Psoas muscle (tissue), 8 donors: ENCODE measurements at regions of chr10 and their contacts with region 1.

Region 1: GRCh38 chr10:91838199-91838598 is 40.0 kb downstream of the TNKS2 start:
- DNase-seq: no peak
- ATAC-seq: peak in 1 of 4 donors; percentile 8
- H3K4me3 ChIP-seq: no peak overlapping the region
- H3K27ac ChIP-seq: no peak overlapping the region
- H3K4me1 ChIP-seq: no peaks in the 10 kb centered on the region
- H3K27me3 ChIP-seq: no peaks in the 10 kb centered on the region
- CTCF ChIP-seq: no peak

Region 2: GRCh38 chr10:91953600-91954160 is 115.5 kb after region 1 on chr10:
- intact Hi-C with region 1: loop called in 1 of 2 experiments (anchors 10 kb)
- DNase-seq: no peak
- ATAC-seq: no peak
- H3K4me3 ChIP-seq: no peak overlapping the region
- H3K27ac ChIP-seq: no peak overlapping the region
- H3K4me1 ChIP-seq: no peaks in the 10 kb centered on the region
- H3K27me3 ChIP-seq: no peaks in the 10 kb centered on the region
- CTCF ChIP-seq: no peak

Region 3: GRCh38 chr10:91983416-91983815 is 145.2 kb after region 1 on chr10:
- intact Hi-C with region 1: loop called in 1 of 2 experiments (anchors 10 kb)
- DNase-seq: no peak
- ATAC-seq: no peak
- H3K4me3 ChIP-seq: no peak overlapping the region
- H3K27ac ChIP-seq: no peak overlapping the region
- H3K4me1 ChIP-seq: no peaks in the 10 kb centered on the region
- H3K27me3 ChIP-seq: no peaks in the 10 kb centered on the region
- CTCF ChIP-seq: no peak

Region 4: GRCh38 chr10:91992031-91992430 is 153.8 kb after region 1 on chr10:
- intact Hi-C with region 1: loop called (anchors 10 kb)
- DNase-seq: no peak
- ATAC-seq: no peak
- H3K4me3 ChIP-seq: no peak overlapping the region
- H3K27ac ChIP-seq: no peak overlapping the region
- H3K4me1 ChIP-seq: no peaks in the 10 kb centered on the region
- H3K27me3 ChIP-seq: no peaks in the 10 kb centered on the region
- CTCF ChIP-seq: no peak

Region 5: DNA sequence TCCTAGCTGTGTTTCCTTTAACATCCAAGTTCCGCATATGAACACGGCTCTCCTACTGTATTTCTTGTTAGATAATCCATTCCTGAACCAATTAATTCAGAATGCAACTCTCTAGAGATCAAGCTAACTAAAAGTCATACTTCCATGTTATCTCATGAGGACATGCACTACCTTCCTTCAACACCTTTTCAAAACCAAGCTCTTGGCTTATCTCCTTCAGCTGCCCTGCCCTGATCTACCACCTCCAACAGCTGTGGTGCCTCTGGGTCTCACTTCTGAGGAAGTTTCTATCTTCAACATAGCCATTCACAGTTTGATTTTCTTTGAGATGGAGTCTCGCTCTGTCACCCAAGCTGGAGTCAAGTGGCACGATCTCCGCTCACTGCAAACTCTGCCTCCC is 626.2 kb after region 1 on chr10:
- intact Hi-C with region 1: loop called in 1 of 2 experiments (anchors 10 kb)
- DNase-seq: no peak
- ATAC-seq: no peak
- H3K4me3 ChIP-seq: no peak overlapping the region
- H3K27ac ChIP-seq: no peak overlapping the region
- H3K4me1 ChIP-seq: no peaks in the 10 kb centered on the region
- H3K27me3 ChIP-seq: no peaks in the 10 kb centered on the region
- CTCF ChIP-seq: no peak